GM13976 (cell line): ENCODE measurements at regions of chr5 and their contacts with region 1.

Region 1: GRCh38 chr5:77015938-77016569 is 14.2 kb upstream of the AGGF1 start:
- DNase-seq: no peak
- CTCF ChIP-seq: peak; percentile 10

Region 2: GRCh38 chr5:76874088-76874581 is 141.9 kb before region 1 on chr5:
- in situ Hi-C with region 1: loop called (anchors 10 kb)
- DNase-seq: peak; percentile 55
- CTCF ChIP-seq: no peak